ENCODE measurements at regions of chr5 and their contacts with region 1.

Region 1: GRCh38 chr5:31531888-31532710 is at the starts of genes C5orf22 and DROSHA:
- DNase-seq: peak; percentile 96
- H3K4me3 Mint-ChIP-seq: peak within 1 kb of the TSS; percentile 94
- H3K27ac Mint-ChIP-seq: peak within 1 kb of the TSS; percentile 92
- H3K4me1 Mint-ChIP-seq: peaks cover 48% of the 10 kb centered on the region
- H3K27me3 Mint-ChIP-seq: no peaks in the 10 kb centered on the region
- total RNA-seq, gene C5orf22: 25.1 to 29.0 TPM
- total RNA-seq, gene DROSHA: 59.6 to 66.1 TPM

Region 2: GRCh38 chr5:31556461-31556860 is 24.4 kb after region 1 on chr5:
- CTCF ChIA-PET with region 1: no interaction called
- POLR2A ChIA-PET with region 1: no interaction called
- intact Hi-C with region 1: no loop called
- DNase-seq: no peak
- H3K4me3 Mint-ChIP-seq: no peak overlapping the region
- H3K27ac Mint-ChIP-seq: no peak overlapping the region
- H3K4me1 Mint-ChIP-seq: peaks cover 6% of the 10 kb centered on the region
- H3K27me3 Mint-ChIP-seq: no peaks in the 10 kb centered on the region

Region 3: GRCh38 chr5:31638748-31639418 is 106.8 kb after region 1 on chr5 and contains the start of gene PDZD2:
- CTCF ChIA-PET with region 1: interaction called, 12 read pairs
- POLR2A ChIA-PET with region 1: no interaction called
- intact Hi-C with region 1: no loop called
- DNase-seq: peak; percentile 75
- H3K4me3 Mint-ChIP-seq: peak within 1 kb of the TSS; percentile 71
- H3K27ac Mint-ChIP-seq: no peak within 1 kb of the TSS
- H3K4me1 Mint-ChIP-seq: peaks cover 10% of the 10 kb centered on the region
- H3K27me3 Mint-ChIP-seq: peaks cover 12% of the 10 kb centered on the region
- total RNA-seq, gene PDZD2: not detected

Region 4: GRCh38 chr5:32312647-32313523 is 780.8 kb after region 1 on chr5 and contains the start of gene MTMR12:
- CTCF ChIA-PET with region 1: no interaction called
- POLR2A ChIA-PET with region 1: no interaction called
- intact Hi-C with region 1: loop called (anchors 10 kb)
- DNase-seq: peak; percentile 100
- H3K4me3 Mint-ChIP-seq: peak within 1 kb of the TSS; percentile 86
- H3K27ac Mint-ChIP-seq: peak within 1 kb of the TSS; percentile 85
- H3K4me1 Mint-ChIP-seq: peaks cover 22% of the 10 kb centered on the region
- H3K27me3 Mint-ChIP-seq: no peaks in the 10 kb centered on the region
- total RNA-seq, gene MTMR12: 22.3 to 22.4 TPM